CD4-positive, alpha-beta memory T cell (primary cell): ENCODE measurements at regions of chr3 and their contacts with region 1.

Region 1: DNA sequence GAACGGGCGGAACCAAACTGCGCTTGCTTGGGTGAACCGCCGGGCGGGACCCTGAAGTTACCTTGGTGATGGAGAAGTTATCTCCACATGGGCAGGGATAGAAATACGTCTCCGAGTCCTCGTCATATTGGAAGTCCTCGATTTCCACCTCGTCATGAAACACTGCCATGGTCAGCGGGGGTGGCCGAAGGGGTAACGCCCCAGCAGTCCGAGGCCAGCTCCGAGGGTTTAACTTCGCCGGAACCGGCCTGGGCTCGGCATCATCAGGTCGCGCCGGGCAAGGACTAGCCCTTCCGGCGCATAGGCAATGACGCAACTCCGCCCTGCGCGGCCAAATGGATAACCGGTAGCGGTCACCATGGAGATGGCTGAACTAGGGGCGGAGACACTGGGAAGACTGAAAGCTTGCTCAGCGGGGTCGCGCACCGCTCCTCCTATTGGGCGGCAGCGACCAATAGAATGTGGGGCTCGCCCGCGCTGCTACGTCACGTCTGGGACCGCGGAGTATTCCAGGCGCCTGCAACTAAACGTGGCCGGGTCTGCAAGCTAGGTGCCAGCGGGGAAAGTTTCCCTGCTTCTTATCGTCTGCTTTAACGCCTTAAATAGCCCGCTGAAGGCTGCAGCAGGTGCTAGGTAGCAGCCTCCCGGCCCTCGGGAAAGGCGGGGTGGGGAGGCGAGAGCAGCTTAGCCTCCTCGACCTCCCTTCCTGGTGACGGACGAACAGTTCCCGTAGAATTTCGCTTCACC is at the starts of genes DPH3 and OXNAD1:
- DNase-seq: peak; percentile 98 to 99 (median 99)
- H3K4me3 ChIP-seq: peak within 1 kb of the TSS; percentile 83 to 98
- H3K4me3 Mint-ChIP-seq: peak within 1 kb of the TSS; percentile 98 to 100 (median 100)
- H3K27ac ChIP-seq: peak within 1 kb of the TSS; percentile 88
- H3K27ac Mint-ChIP-seq: peak within 1 kb of the TSS; percentile 97 to 100 (median 100)
- H3K4me1 ChIP-seq: peaks cover 33% of the 10 kb centered on the region
- H3K4me1 Mint-ChIP-seq: peaks cover 26 to 38% (median 30%) of the 10 kb centered on the region in 4 donors
- H3K27me3 ChIP-seq: no peaks in the 10 kb centered on the region
- H3K27me3 Mint-ChIP-seq: no peaks in the 10 kb centered on the region
- total RNA-seq, gene DPH3: 15.2 to 15.4 TPM
- total RNA-seq, gene OXNAD1: 78.5 to 84.7 TPM

Region 2: DNA sequence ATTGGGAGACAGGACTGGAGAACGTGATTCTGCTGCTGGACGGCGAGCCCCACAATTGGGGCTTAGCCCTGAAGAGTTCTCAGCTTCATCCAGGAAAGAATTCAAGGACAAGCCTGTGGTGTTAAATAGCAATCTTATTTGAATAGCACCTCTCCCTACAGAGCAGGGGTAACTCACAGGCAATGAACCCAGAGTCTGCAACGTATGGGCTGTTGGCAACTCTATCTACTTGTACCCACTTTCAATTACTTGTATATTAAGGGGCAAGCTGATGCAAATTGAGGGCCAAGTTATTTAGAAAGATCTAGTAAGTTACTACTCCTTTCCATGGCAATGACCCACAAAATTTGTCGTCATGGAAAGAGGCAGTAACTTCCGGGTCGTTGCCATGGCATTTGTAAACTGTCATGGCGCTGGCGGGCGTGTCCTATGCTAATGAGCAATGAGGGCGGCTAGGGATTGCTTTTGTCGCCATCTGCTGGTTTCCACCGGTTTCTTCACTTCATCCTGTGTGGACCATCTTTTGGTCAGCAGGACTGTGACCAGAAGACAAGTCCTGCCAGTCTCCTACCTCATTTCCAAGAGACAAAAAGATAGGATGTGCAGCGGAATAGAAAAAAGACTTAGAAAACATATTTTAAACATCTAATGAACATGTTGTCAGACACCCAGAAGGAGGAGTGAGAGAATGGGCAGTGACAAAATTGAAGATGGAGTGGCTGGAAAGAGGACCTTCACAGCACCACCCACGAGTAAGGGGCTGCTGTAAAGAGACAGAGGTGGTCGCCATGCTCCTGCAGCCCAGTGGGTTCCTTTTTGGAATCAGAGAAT is 886.7 kb before region 1 on chr3:
- CTCF ChIA-PET with region 1: no interaction called
- POLR2A ChIA-PET with region 1: no interaction called
- intact Hi-C with region 1: loop called (anchors 5 kb)
- DNase-seq: peak; percentile 94 to 97 (median 95)
- H3K4me3 ChIP-seq: no peak overlapping the region
- H3K4me3 Mint-ChIP-seq: peak overlapping the region in 5 of 8 donors; percentile 11 to 82 (median 22)
- H3K27ac ChIP-seq: peak overlapping the region; percentile 91
- H3K27ac Mint-ChIP-seq: peak overlapping the region; percentile 95 to 98 (median 97)
- H3K4me1 ChIP-seq: peaks cover 5% of the 10 kb centered on the region
- H3K4me1 Mint-ChIP-seq: peaks cover 9 to 10% (median 9%) of the 10 kb centered on the region in 4 donors
- H3K27me3 ChIP-seq: no peaks in the 10 kb centered on the region
- H3K27me3 Mint-ChIP-seq: peaks cover 0 to 1% of the 10 kb centered on the region in 2 donors

Region 3: GRCh38 chr3:16247276-16248061 is 17.4 kb before region 1 on chr3:
- CTCF ChIA-PET with region 1: interaction called, 12 read pairs
- POLR2A ChIA-PET with region 1: interaction called, 4 read pairs
- intact Hi-C with region 1: loop called (anchors 1 kb)
- DNase-seq: peak; percentile 73 to 78 (median 75)
- H3K4me3 ChIP-seq: no peak overlapping the region
- H3K4me3 Mint-ChIP-seq: peak overlapping the region in 5 of 8 donors; percentile 10 to 57 (median 38)
- H3K27ac ChIP-seq: no peak overlapping the region
- H3K27ac Mint-ChIP-seq: peak overlapping the region in 1 of 7 donors; percentile 32
- H3K4me1 ChIP-seq: peaks cover 3% of the 10 kb centered on the region
- H3K4me1 Mint-ChIP-seq: peaks cover 6 to 17% (median 9%) of the 10 kb centered on the region in 4 donors
- H3K27me3 ChIP-seq: no peaks in the 10 kb centered on the region
- H3K27me3 Mint-ChIP-seq: no peaks in the 10 kb centered on the region

Region 4: GRCh38 chr3:16309558-16309957 is 44.7 kb after region 1 on chr3:
- CTCF ChIA-PET with region 1: interaction called, 169 read pairs
- POLR2A ChIA-PET with region 1: interaction called, 23 read pairs
- intact Hi-C with region 1: loop called (anchors 1 kb)
- DNase-seq: peak; percentile 59 to 88 (median 65)
- H3K4me3 ChIP-seq: no peak overlapping the region
- H3K4me3 Mint-ChIP-seq: peak overlapping the region; percentile 54 to 90 (median 80)
- H3K27ac ChIP-seq: peak overlapping the region; percentile 59
- H3K27ac Mint-ChIP-seq: peak overlapping the region; percentile 86 to 99 (median 89)
- H3K4me1 ChIP-seq: peaks cover 98% of the 10 kb centered on the region
- H3K4me1 Mint-ChIP-seq: peaks cover 79 to 95% (median 89%) of the 10 kb centered on the region in 4 donors
- H3K27me3 ChIP-seq: no peaks in the 10 kb centered on the region
- H3K27me3 Mint-ChIP-seq: no peaks in the 10 kb centered on the region

Region 5: GRCh38 chr3:16511681-16512434 is 247.0 kb after region 1 on chr3:
- CTCF ChIA-PET with region 1: interaction called, 7 read pairs
- POLR2A ChIA-PET with region 1: interaction called, 16 read pairs
- intact Hi-C with region 1: loop called (anchors 2 kb)
- DNase-seq: peak; percentile 81 to 92 (median 85)
- H3K4me3 ChIP-seq: peak overlapping the region; percentile 70 to 80
- H3K4me3 Mint-ChIP-seq: peak overlapping the region; percentile 91 to 98 (median 96)
- H3K27ac ChIP-seq: peak overlapping the region; percentile 73
- H3K27ac Mint-ChIP-seq: peak overlapping the region; percentile 93 to 98 (median 96)
- H3K4me1 ChIP-seq: peaks cover 86% of the 10 kb centered on the region
- H3K4me1 Mint-ChIP-seq: peaks cover 57 to 89% (median 73%) of the 10 kb centered on the region in 4 donors
- H3K27me3 ChIP-seq: no peaks in the 10 kb centered on the region
- H3K27me3 Mint-ChIP-seq: no peaks in the 10 kb centered on the region

Region 6: DNA sequence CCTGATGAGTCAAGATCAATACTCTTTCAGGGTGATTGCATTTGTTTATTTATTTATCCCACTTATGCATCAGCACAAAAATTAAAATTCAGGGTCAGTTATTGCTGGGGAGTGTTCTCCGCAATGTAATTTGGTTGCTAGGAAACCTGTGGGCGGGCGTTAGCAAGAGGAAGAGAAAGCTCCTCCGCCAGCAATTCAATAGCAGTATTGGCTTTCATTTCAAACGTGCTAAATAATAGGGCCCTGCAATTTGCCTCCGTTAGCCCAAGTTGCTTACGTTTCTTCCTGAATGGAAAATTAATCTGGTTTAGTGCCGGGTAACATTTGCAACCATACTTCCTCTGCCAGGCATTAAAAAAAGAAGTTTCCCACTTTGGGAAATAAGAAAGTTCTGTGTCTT is 584.3 kb after region 1 on chr3:
- CTCF ChIA-PET with region 1: no interaction called
- POLR2A ChIA-PET with region 1: no interaction called
- intact Hi-C with region 1: loop called (anchors 10 kb)
- DNase-seq: peak; percentile 71 to 84 (median 77)
- H3K4me3 ChIP-seq: peak overlapping the region; percentile 8 to 16
- H3K4me3 Mint-ChIP-seq: peak overlapping the region; percentile 51 to 86 (median 78)
- H3K27ac ChIP-seq: peak overlapping the region; percentile 44
- H3K27ac Mint-ChIP-seq: peak overlapping the region; percentile 81 to 97 (median 90)
- H3K4me1 ChIP-seq: peaks cover 56% of the 10 kb centered on the region
- H3K4me1 Mint-ChIP-seq: peaks cover 40 to 61% (median 56%) of the 10 kb centered on the region in 4 donors
- H3K27me3 ChIP-seq: no peaks in the 10 kb centered on the region
- H3K27me3 Mint-ChIP-seq: no peaks in the 10 kb centered on the region